ENCODE measurements at regions of chr20 and their contacts with region 1.

Region 1: DNA sequence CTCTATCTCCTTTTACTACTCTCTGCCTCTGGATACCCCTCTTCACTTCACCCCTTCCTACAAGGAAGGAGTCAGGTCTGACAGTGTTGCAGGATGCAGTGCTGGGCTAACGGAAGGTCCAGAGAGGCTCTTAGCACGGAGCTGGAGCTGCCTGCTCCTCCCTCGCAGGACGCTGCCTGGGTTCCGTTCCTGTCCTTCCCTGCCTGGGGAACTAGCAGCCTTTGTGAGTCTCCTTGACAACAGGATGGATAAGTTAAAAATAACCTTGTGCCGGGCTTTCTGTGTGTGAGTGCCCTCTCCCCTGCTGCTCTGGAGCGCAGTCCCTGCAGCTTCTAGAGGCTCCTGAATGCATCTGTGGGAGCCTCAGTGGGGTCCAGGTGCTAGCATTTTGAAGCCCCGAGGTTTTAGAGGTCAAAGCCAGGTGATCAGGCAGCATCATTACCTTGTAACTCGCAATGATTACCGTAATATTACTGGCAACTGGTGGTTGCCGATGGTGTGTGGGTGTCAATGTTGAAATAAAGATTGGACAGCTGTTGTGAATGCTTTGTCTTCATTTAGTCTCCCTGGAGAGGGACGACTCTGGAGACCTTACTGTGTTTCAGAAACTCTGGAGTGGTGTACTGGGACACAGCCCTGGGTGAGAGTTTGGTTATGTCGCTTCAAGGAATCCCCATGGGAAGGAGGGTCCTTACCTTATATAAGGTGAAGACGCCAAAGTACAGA is 44.4 kb downstream of the CDS2 start:
- DNase-seq: peak; percentile 70 to 75
- ATAC-seq: peak; percentile 76
- H3K4me3 ChIP-seq: no peak overlapping the region
- H3K27ac ChIP-seq: peak overlapping the region in 1 of 2 donors; percentile 15
- H3K4me1 ChIP-seq: peaks cover 0 to 4% of the 10 kb centered on the region in 2 donors
- H3K27me3 ChIP-seq: no peaks in the 10 kb centered on the region

Region 2: GRCh38 chr20:5135363-5136012 is 35.7 kb before region 1 on chr20:
- intact Hi-C with region 1: loop called (anchors 5 kb)
- DNase-seq: no peak
- ATAC-seq: peak; percentile 65
- H3K4me3 ChIP-seq: no peak overlapping the region
- H3K27ac ChIP-seq: peak overlapping the region; percentile 52 to 69
- H3K4me1 ChIP-seq: peaks cover 0 to 7% of the 10 kb centered on the region in 2 donors
- H3K27me3 ChIP-seq: no peaks in the 10 kb centered on the region

Region 3: DNA sequence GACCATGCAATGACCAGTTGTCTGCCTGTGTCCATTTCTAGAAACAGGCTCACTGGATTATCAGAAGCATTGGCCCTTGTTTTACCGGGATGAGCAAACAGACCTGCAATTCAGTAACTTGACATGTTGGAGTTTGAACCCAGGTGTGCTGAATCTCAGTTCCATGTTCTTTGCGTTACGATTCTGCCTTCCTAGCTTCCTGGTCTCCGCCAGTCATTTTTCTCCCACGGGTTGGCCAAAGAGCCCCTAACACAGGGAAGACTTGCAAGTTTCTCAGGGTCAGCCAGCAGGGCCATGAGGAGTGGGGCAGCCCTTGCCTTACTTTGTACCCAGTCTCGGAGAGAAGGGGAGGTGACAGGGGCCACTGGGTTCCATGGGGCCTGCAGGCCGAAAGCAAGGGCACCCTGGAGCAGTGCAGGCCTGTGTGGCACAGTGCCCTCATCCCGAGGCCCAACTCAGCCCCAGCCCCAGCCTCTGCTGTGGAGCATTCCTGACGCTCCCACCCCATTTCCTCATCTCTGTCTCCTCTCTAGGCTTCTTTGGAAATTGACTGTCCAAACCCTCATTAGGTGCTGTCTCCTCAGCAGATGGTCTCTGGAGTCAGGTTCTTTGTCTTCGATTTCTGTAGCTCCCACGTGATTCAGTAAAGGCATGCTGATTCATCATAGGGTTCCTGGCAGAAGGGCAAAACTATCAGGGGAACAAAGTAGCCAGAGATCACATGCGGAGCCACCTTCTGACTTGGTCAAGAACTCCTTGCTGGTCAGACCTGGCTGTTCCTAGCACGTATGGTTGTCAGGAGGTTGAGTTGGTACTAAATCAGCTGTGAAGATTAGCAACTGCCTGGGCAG is 20.8 kb before region 1 on chr20:
- intact Hi-C with region 1: no loop called
- DNase-seq: no peak
- ATAC-seq: peak; percentile 23
- H3K4me3 ChIP-seq: no peak overlapping the region
- H3K27ac ChIP-seq: peak overlapping the region in 1 of 2 donors; percentile 8
- H3K4me1 ChIP-seq: peaks cover 9 to 19% of the 10 kb centered on the region in 2 donors
- H3K27me3 ChIP-seq: no peaks in the 10 kb centered on the region

Measured in aorta (tissue), 5 donors.